ENCODE measurements at regions of chr3 and their contacts with region 1.

Region 1: DNA sequence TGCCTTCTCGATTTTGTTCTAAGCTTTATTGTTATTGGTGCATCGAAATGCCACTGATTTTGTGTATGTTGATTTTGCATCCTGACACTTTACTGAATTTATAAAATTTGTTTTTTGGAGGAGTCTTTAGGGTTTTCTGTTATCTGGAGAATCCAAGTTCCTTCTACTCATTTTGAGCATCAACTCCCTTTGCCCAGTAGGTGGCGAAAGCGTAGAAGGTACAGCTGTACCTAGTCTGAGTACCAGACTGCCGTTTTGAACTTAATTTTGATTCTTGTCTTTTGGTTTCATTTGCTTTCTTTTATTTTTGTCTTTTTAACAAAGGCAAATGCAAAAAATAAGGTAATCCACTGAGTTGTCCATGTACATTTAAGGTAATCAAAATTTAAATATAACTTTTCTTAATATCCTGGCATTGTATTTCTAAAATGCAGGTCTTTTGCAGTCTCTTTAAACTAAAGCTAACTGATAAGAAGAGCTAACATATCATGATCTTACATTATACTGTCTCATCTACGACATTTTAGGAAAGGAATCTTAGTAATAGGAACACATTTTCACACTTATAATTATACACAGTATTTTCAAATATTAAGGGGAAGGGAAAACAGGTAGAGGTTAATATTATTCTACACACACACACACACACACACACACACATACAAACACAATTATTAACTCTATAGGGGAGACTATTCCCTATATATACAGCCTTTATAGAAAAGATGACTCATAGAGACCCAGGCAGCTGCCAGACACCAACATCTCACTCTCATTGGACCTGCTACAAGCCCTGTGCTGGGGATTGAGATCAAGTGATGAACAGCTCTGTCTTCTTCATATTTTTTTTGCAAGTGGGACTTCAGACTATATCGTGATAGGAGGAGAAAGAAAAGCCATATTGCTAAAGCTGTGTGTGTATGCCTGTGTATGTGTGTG is 71.7 kb downstream of the SYNPR start:
- DNase-seq: peak; percentile 45
- H3K4me3 ChIP-seq: peak overlapping the region in 1 of 2 experiments; percentile 21; a peak in 1 of 4 replicates
- H3K27ac ChIP-seq: no peak overlapping the region
- H3K4me1 ChIP-seq: peaks cover 3 to 14% of the 10 kb centered on the region in 2 experiments; a peak in 2 of 4 replicates
- H3K27me3 ChIP-seq: no peaks in the 10 kb centered on the region
- CTCF ChIP-seq: peak; percentile 91
- EP300 ChIP-seq: no peak
- RAD21 ChIP-seq: peak; percentile 80

Region 2: GRCh38 chr3:63364910-63365431 is 15.1 kb after region 1 on chr3:
- CTCF ChIA-PET with region 1: interaction called, 80 read pairs
- POLR2A ChIA-PET with region 1: no interaction called
- DNase-seq: peak; percentile 16
- H3K4me3 ChIP-seq: peak overlapping the region in 1 of 2 experiments; percentile 30; a peak in 1 of 4 replicates
- H3K27ac ChIP-seq: no peak overlapping the region
- H3K4me1 ChIP-seq: no peaks in the 10 kb centered on the region
- H3K27me3 ChIP-seq: no peaks in the 10 kb centered on the region
- CTCF ChIP-seq: peak; percentile 48
- EP300 ChIP-seq: no peak
- RAD21 ChIP-seq: peak; percentile 58

Region 3: DNA sequence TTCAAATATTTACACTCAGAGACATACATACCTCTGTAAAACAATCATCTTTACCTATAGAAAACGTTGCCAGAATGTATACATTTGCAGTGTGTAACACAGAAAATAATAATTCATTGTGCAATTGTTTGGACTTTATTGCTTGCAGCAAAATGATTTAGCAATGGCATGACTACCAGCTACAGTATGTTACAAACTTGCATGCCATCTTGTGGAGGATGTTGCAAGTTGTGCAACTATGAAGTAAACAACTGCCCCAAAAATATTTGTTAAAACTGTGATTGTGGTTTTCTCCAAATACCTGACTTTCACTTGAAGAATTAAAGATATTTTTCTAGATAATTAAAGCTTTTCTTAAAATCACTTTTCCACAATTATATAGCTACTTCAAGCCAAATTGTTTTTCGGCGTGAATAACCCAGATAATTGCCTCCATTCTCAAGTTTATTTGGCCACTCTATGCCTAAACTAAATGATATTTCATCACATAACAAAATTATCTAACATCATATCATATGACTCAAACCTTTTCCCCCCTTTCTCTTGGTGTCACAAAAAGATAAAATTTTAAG is 442.2 kb after region 1 on chr3:
- CTCF ChIA-PET with region 1: interaction called, 30 read pairs
- POLR2A ChIA-PET with region 1: no interaction called
- DNase-seq: no peak
- H3K4me3 ChIP-seq: no peak overlapping the region
- H3K27ac ChIP-seq: no peak overlapping the region
- H3K4me1 ChIP-seq: no peaks in the 10 kb centered on the region
- H3K27me3 ChIP-seq: no peaks in the 10 kb centered on the region
- CTCF ChIP-seq: peak; percentile 61
- EP300 ChIP-seq: no peak
- RAD21 ChIP-seq: peak; percentile 71

Region 4: DNA sequence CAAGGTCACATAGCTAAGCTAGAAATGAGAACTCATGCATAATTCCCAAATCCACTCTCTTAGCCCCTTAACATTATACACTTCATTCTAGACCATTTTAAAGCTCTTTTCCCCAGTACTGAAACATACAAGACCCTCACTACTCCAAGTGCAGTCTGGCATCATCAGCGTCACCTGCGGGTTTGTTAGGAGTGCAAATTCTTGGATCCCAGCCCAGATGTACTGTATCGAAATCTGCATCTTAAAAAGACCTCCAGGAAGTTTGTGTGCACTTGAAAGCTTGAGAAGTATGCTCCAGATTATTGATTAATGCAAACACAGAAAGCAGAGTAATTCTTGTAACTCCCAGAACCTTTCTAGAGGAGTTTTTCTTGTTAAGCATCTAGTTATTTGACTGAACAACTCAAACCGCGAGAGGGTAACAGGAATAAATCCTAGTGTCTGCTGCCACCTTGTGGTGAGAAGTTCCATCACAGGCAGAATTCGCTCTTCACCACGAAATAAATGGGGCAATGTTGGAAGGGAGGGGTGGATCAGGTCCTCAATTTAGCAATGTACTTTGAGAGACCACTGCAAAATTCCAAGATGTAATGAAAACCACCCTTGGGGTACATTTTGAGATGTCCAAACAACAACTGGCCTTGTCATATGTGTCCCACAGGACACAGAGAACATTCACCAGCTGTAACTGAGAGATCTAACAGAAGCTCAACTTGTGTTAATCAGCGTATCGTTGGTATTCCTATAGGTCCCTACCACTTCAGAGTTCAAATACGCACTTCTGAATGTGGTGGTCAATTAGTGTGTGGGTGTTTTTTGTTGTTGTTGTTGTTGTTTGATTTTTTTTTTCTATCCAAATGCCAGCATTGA is 468.7 kb after region 1 on chr3:
- CTCF ChIA-PET with region 1: interaction called, 444 read pairs
- POLR2A ChIA-PET with region 1: interaction called, 3 read pairs
- DNase-seq: peak; percentile 56
- H3K4me3 ChIP-seq: no peak overlapping the region; a peak in 1 of 4 replicates
- H3K27ac ChIP-seq: no peak overlapping the region
- H3K4me1 ChIP-seq: peaks cover 0 to 3% of the 10 kb centered on the region in 2 experiments; a peak in 2 of 4 replicates
- H3K27me3 ChIP-seq: no peaks in the 10 kb centered on the region
- CTCF ChIP-seq: peak; percentile 95
- EP300 ChIP-seq: no peak
- RAD21 ChIP-seq: peak; percentile 92

Region 5: DNA sequence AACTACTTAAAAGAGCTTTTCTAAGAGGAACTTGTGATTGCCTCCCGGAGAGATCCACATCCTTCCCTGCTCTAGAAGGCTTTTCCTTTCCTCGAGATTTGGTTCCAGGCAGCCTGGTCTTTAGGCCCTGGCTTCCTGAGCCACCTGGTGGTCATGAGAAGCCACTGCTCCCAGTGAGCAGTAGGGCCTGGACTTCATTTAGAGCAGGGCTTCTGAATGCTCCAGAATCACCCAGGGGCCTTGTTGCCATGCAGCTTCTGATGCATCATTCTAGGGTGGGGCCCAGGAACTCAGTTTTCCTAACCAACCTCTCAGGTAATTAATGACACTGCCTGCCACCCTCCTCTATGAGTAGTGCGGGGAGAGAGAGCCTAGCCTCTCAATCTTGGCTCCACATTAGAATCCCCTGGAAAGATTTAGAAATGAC is 643.8 kb after region 1 on chr3:
- CTCF ChIA-PET with region 1: interaction called, 30 read pairs
- POLR2A ChIA-PET with region 1: no interaction called
- DNase-seq: peak; percentile 82
- H3K4me3 ChIP-seq: no peak overlapping the region; a peak in 1 of 4 replicates
- H3K27ac ChIP-seq: no peak overlapping the region
- H3K4me1 ChIP-seq: no peaks in the 10 kb centered on the region
- H3K27me3 ChIP-seq: no peaks in the 10 kb centered on the region
- CTCF ChIP-seq: peak; percentile 90
- EP300 ChIP-seq: no peak
- RAD21 ChIP-seq: peak; percentile 90